ENCODE measurements at regions of chr11 and their contacts with region 1.

Region 1: DNA sequence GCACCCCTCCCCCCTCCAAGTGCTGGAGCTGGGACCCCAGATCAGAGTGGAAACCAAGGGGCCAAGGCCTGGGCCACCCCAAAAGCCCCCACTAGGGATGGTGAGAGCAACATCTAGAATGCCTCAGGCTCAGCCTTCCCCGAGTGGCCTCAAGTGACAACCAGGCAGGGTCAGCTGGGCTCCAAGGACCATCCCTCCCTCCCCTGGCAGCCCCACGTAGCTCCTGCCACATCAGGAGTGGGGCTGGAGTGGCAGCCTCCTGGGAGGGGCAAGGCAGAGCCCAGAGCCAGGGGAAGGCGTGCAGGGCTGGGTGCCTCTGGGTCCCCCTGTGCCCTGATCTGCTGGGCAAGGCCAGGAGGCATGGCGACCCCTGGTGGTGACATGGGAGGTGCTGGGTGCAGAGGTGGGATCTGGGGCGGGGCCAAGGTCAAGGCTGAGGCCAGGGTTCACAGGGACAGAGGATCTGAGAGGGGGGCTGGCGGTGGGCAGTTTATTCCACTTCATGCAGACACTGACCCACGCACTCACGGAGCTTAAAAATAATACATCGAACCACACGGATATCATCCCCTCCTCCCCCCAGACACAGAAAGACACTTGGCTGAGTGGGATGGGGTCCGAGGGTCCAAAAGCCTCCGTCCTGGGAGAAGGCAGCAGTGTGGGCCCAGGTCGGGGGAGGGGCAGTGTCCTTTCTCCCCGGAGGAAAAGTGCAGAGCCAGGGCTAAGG is 15.8 kb upstream of the EHD1 start:
- DNase-seq: peak in 9 of 10 donors; percentile 49 to 96 (median 81)

Region 2: GRCh38 chr11:64846998-64847666 is 47.1 kb before region 1 on chr11:
- intact Hi-C with region 1: loop called (anchors 1 kb)
- DNase-seq: peak; percentile 79 to 99 (median 93)

Measured in posterior cingulate gyrus (tissue), 11 donors.